ENCODE measurements at regions of chrX and their contacts with region 1.

Region 1: DNA sequence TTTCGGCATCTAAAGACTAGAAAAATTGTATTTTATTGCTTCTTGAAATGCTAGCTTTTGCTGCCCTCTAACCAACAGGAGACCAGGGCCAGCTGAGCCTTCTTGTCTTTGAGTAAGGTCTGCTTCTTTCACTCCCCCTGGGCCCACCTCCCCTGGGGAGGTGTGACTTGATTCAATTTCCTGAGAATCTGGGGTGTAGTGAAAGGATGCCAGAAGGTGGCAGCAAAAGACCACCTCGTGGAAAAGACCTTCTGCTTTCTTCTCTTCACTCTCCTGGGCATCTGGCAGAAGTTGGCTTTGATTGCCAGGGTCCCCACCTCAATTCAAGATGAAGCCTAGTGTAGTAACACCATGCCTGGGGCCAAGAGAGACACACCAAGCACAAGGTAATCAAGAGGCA is 96.5 kb upstream of the MAOA start:
- DNase-seq: peak; percentile 39 to 57
- H3K4me3 ChIP-seq: no peak overlapping the region
- H3K27ac ChIP-seq: no peak overlapping the region
- H3K4me1 ChIP-seq: no peaks in the 10 kb centered on the region
- H3K27me3 ChIP-seq: no peaks in the 10 kb centered on the region
- CTCF ChIP-seq: peak; percentile 46 to 71 (median 62)
- POLR2A ChIP-seq: no peak

Region 2: GRCh38 chrX:43481576-43481975 is 78.1 kb before region 1 on chrX:
- intact Hi-C with region 1: no loop called
- DNase-seq: no peak
- H3K4me3 ChIP-seq: no peak overlapping the region
- H3K27ac ChIP-seq: no peak overlapping the region
- H3K4me1 ChIP-seq: no peaks in the 10 kb centered on the region
- H3K27me3 ChIP-seq: no peaks in the 10 kb centered on the region
- CTCF ChIP-seq: no peak
- POLR2A ChIP-seq: no peak

Region 3: DNA sequence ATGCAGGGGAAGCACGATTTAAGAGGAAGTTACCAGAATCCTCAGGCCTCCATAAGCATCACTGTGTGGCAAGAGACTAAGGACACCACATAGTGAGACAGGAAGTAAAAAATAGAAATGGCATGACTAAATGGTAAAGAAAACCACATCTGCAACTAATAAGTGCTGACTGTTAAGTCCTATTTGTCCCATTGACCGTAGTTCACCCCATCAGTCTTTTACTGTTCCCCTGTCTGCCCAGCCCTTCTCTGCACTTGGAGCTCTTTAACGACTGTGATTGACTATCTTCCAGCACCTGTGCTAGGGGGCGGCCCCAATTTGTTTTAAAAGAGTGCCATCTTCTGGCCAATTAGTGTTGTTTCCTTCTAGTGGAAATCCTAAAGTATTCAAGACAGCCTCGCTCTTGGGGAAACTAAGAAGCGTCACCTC is 190.6 kb after region 1 on chrX:
- intact Hi-C with region 1: loop called (anchors 10 kb)
- DNase-seq: peak; percentile 35 to 62
- H3K4me3 ChIP-seq: no peak overlapping the region
- H3K27ac ChIP-seq: no peak overlapping the region
- H3K4me1 ChIP-seq: peaks cover 0 to 8% of the 10 kb centered on the region in 2 donors
- H3K27me3 ChIP-seq: no peaks in the 10 kb centered on the region
- CTCF ChIP-seq: peak; percentile 44 to 72 (median 62)
- POLR2A ChIP-seq: no peak

Region 4: DNA sequence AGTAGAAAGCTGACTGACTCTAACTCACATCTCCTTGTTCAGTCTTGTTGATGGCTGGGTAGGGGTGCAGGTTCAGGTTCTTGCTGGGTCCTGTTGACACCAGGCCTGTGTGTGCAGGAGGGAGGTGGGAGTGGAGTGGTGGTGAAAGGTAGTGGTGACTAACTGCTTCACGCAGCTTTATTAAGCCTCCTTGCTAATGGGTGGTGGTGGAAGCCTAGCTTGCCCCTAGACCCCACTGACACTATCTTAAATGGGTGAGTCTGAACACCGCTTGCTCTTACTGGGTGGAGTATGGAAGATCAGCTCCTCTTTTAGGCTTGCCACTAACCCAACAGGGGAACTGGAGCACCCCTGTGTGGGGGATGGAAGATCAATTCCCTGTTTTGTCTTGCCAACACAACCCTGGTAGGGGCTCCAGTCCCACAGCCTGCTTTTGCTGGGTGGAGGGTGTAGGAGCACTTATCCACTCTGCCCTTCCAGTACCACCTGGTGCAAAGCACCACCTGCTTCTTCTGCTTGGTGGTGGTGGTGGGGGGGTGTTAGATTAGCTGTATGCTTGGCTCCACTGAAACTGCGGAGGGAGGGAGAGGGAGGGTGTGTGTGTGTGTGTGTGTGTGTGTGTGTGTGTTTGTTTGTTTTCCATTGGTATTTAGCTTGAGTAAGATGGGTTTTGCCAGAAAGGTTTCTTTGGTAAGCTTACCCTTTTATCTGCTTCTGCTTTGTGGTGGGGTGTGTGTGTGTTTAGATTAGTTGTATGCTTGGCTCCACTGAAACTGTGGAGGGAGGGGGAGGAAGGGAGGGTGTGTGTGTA is 1339.0 kb after region 1 on chrX:
- intact Hi-C with region 1: no loop called
- DNase-seq: no peak
- H3K4me3 ChIP-seq: no peak overlapping the region
- H3K27ac ChIP-seq: no peak overlapping the region
- H3K4me1 ChIP-seq: no peaks in the 10 kb centered on the region
- H3K27me3 ChIP-seq: no peaks in the 10 kb centered on the region
- CTCF ChIP-seq: no peak
- POLR2A ChIP-seq: no peak

Measured in uterus (tissue), 4 donors.